Aorta (tissue), 5 donors: ENCODE measurements at regions of chr7 and their contacts with region 1.

Region 1: DNA sequence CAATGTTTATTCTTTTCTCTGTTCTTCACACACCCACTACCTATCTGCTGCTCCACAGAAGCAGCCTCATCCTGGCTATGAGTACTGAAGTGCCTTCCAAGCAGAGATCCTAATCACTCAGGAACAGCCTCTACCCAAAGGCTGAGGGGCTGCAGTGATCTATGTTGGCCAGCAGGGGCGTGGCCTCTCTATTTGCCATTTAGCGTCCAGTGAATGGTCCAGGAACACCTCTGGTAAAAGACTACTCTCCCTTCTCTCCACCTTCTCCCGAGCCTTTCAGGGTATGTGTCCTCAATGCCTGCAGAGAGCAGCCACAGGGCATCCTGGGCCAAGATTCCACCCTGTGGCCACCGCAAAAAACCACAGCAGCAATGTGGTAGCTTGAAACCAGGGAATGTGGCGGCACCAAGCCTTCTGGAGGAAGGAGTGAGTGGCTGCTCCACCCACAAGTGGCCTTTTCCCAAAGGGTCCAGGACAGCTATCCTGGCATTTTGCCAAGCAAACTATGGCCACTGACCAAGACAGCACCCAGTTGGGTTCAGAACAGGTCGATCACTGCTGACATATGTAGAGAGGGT is 70.9 kb downstream of the SYPL1 start:
- DNase-seq: no peak
- ATAC-seq: no peak
- H3K4me3 ChIP-seq: no peak overlapping the region
- H3K27ac ChIP-seq: no peak overlapping the region
- H3K4me1 ChIP-seq: no peaks in the 10 kb centered on the region
- H3K27me3 ChIP-seq: no peaks in the 10 kb centered on the region

Region 2: GRCh38 chr7:105652359-105652993 is 388.8 kb before region 1 on chr7:
- intact Hi-C with region 1: loop called (anchors 2 to 5 kb)
- DNase-seq: peak; percentile 78 to 91
- ATAC-seq: peak; percentile 85
- H3K4me3 ChIP-seq: no peak overlapping the region
- H3K27ac ChIP-seq: no peak overlapping the region
- H3K4me1 ChIP-seq: no peaks in the 10 kb centered on the region
- H3K27me3 ChIP-seq: no peaks in the 10 kb centered on the region

Region 3: DNA sequence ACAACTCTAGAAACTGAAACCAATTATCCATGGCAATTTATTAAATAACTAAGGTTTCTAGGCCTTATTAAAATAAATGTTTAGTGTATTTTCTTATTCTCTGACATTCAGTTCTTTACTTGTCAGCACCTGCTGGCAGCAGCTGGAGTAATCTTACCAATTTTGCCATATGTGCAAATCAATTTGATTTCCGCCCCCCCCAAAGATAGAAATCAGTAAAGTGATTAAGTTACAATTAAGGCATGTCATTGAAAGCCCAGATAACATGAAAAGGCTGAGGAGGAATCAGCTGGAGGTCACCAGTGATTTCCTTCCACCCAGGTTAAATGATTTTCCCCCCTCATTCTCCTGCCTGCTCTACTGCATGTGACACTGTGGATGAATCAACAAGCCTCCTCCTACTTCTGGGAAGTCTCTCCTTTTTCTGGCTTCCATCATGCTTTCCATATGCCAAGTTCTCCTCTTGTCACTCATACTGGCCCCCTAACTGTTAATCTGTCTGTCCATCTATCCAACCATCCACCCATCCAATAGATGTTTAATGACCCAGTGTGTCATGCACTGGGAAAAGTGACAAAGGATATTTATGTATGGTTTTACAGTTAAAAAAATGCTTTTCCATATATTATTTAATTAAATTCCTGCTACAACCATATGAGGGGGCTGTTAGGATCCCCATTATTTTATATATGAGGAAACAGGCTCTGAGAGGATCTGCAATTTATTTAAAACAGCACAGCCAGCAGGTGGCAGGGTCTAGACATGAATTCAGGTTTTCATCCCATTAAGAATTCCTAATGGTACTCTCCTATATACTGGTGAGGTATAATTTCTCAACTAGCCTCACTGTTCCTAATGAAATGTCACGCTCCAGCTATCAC is 281.3 kb before region 1 on chr7:
- intact Hi-C with region 1: loop called (anchors 2 kb)
- DNase-seq: no peak
- ATAC-seq: no peak
- H3K4me3 ChIP-seq: no peak overlapping the region
- H3K27ac ChIP-seq: no peak overlapping the region
- H3K4me1 ChIP-seq: no peaks in the 10 kb centered on the region
- H3K27me3 ChIP-seq: no peaks in the 10 kb centered on the region